ENCODE measurements at regions of chr1 and their contacts with region 1.

Region 1: GRCh38 chr1:33219881-33220661 is 36.2 kb upstream of the ZNF362 start:
- DNase-seq: peak; percentile 60
- ATAC-seq: peak; percentile 69
- H3K4me3 ChIP-seq: peak overlapping the region in 1 of 2 experiments; percentile 42; a peak in 2 of 4 replicates
- H3K27ac ChIP-seq: peak overlapping the region; percentile 82
- H3K4me1 ChIP-seq: peaks cover 30 to 41% of the 10 kb centered on the region in 2 experiments
- H3K27me3 ChIP-seq: no peaks in the 10 kb centered on the region
- CTCF ChIP-seq: no peak
- POLR2A ChIP-seq: no peak
- RAD21 ChIP-seq: peak; percentile 33; the same call in 1 of the 2 replicates

Region 2: GRCh38 chr1:33367485-33368405 is 147.7 kb after region 1 on chr1:
- CTCF ChIA-PET with region 1: interaction called, 4 read pairs
- POLR2A ChIA-PET with region 1: no interaction called
- RAD21 ChIA-PET with region 1: no interaction called
- intact Hi-C with region 1: loop called (anchors 10 kb)
- DNase-seq: peak; percentile 38
- ATAC-seq: peak; percentile 91
- H3K4me3 ChIP-seq: no peak overlapping the region
- H3K27ac ChIP-seq: no peak overlapping the region; the same call in 1 of the 2 replicates
- H3K4me1 ChIP-seq: 0 out of 4 replicates have a peak, but pooled peaks cover 0 to 3% of the 10 kb centered on the region in 2 experiments
- H3K27me3 ChIP-seq: no peaks in the 10 kb centered on the region
- CTCF ChIP-seq: peak; percentile 87 to 93 (median 93)
- POLR2A ChIP-seq: no peak
- RAD21 ChIP-seq: peak; percentile 92

Region 3: GRCh38 chr1:33378976-33379375 is 158.9 kb after region 1 on chr1:
- CTCF ChIA-PET with region 1: no interaction called
- POLR2A ChIA-PET with region 1: no interaction called
- RAD21 ChIA-PET with region 1: no interaction called
- intact Hi-C with region 1: no loop called
- DNase-seq: no peak
- ATAC-seq: peak; percentile 61
- H3K4me3 ChIP-seq: no peak overlapping the region
- H3K27ac ChIP-seq: no peak overlapping the region
- H3K4me1 ChIP-seq: peaks cover 19 to 52% of the 10 kb centered on the region in 2 experiments
- H3K27me3 ChIP-seq: no peaks in the 10 kb centered on the region
- CTCF ChIP-seq: 0 out of 6 replicates have a peak, but pooled peaks of 1 of the 3 experiments have one; percentile 15
- POLR2A ChIP-seq: no peak
- RAD21 ChIP-seq: no peak

Region 4: DNA sequence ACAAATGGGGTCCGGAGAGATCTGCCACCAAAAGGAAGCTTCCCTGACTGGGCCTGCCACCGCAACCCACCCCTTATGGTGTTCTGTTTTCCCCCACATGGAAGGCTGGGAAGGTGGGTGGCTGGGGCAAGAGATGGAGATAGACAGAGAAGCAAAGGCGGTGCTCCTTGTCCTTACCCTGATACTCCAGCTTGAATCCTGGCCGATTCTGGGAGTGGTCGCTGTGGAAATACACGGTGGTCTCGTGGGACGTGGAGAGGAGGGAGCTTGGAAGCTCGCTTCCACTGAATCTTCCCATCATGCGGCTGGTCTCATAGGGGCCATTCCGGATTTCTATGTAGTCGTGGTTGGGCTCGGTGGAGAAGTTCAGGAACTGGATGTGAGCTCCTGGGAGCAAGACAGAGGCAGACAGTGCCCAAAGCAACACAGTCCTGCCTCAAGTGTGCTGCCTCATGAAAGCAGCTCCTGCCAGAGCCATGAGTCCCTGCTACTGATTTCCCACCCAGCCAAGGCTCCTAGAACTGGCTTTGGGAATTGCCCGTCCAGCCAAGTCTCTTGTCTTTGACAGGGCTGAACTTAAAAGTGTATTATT is 390.9 kb after region 1 on chr1:
- CTCF ChIA-PET with region 1: interaction called, 3 read pairs
- POLR2A ChIA-PET with region 1: no interaction called
- RAD21 ChIA-PET with region 1: interaction called in 1 of 2 experiments, 5 read pairs
- intact Hi-C with region 1: loop called (anchors 5 kb)
- DNase-seq: no peak
- ATAC-seq: no peak
- H3K4me3 ChIP-seq: no peak overlapping the region
- H3K27ac ChIP-seq: no peak overlapping the region
- H3K4me1 ChIP-seq: peaks cover 0 to 5% of the 10 kb centered on the region in 2 experiments; a peak in 1 of 4 replicates
- H3K27me3 ChIP-seq: peaks cover 4% of the 10 kb centered on the region; the same call in 1 of the 2 replicates
- CTCF ChIP-seq: no peak
- POLR2A ChIP-seq: no peak
- RAD21 ChIP-seq: no peak